Left ventricle myocardium superior (tissue), 1 donor: ENCODE measurements at regions of chr13 and their contacts with region 1.

Region 1: DNA sequence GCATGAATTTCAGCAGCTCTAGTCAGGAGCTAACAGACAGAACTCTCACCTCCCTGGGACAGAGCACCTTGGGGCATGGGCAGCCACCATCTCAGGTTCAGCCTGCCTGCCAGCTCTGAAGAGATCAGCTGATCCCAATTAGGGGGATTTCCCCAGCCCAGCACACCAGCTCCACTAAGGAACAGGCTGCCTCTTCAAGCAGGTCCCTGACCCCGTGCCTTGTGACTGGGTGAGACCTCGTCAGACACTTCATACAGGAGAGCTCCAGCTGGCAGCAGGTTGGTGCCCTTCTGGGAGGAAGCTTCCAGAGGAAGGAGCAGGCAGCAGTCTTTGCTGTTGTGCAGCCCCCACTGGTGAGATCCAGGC is 84.5 kb upstream of the UFM1 start:
- DNase-seq: no peak
- ATAC-seq: peak; percentile 57

Region 2: GRCh38 chr13:38073931-38074330 is 191.2 kb before region 1 on chr13:
- intact Hi-C with region 1: loop called (anchors 10 kb)
- DNase-seq: no peak
- ATAC-seq: no peak